ENCODE measurements at regions of chr2 and their contacts with region 1.

Region 1: GRCh38 chr2:69816923-69817542 is 12.4 kb upstream of the GMCL1 start:
- DNase-seq: peak; percentile 72
- H3K27ac ChIP-seq: no peak overlapping the region
- CTCF ChIP-seq: peak; percentile 87

Region 2: GRCh38 chr2:69828938-69829255 is 11.9 kb after region 1 on chr2:
- CTCF ChIA-PET with region 1: interaction called, 13 read pairs
- POLR2A ChIA-PET with region 1: no interaction called
- DNase-seq: no peak
- H3K27ac ChIP-seq: peak overlapping the region; percentile 90
- CTCF ChIP-seq: no peak

Region 3: GRCh38 chr2:70283500-70284191 is 466.6 kb after region 1 on chr2:
- CTCF ChIA-PET with region 1: no interaction called
- POLR2A ChIA-PET with region 1: no interaction called
- DNase-seq: no peak
- H3K27ac ChIP-seq: peak overlapping the region; percentile 21
- CTCF ChIP-seq: no peak

Measured in RWPE1 (cell line).